Activated CD8-positive, alpha-beta memory T cell treated with anti-CD3 and anti-CD28 coated beads, Interleukin-2, amount 10 ng/mL, durations not matched to agents 7 days and 5 days (primary cell): ENCODE measurements at regions of chr1 and their contacts with region 1.

Region 1: GRCh38 chr1:117605774-117606648 is at the start of gene TENT5C:
- DNase-seq: peak; percentile 99
- ATAC-seq: peak; percentile 85
- H3K4me3 Mint-ChIP-seq: peak within 1 kb of the TSS; percentile 100
- H3K27ac Mint-ChIP-seq: peak within 1 kb of the TSS; percentile 98
- H3K4me1 Mint-ChIP-seq: peaks cover 45% of the 10 kb centered on the region
- H3K27me3 Mint-ChIP-seq: peaks cover 18% of the 10 kb centered on the region
- total RNA-seq, gene TENT5C: 41.6 to 50.3 TPM

Region 2: GRCh38 chr1:117654493-117655219 is 48.6 kb after region 1 on chr1:
- CTCF ChIA-PET with region 1: interaction called, 54 read pairs
- DNase-seq: no peak
- ATAC-seq: peak; percentile 10
- H3K4me3 Mint-ChIP-seq: peak overlapping the region; percentile 22
- H3K27ac Mint-ChIP-seq: peak overlapping the region; percentile 95
- H3K4me1 Mint-ChIP-seq: peaks cover 88% of the 10 kb centered on the region
- H3K27me3 Mint-ChIP-seq: no peaks in the 10 kb centered on the region